Activated CD8-positive, alpha-beta T cell treated with anti-CD3 and anti-CD28 coated beads for 36 hours (primary cell): ENCODE measurements at regions of chrX and their contacts with region 1.

Region 1: DNA sequence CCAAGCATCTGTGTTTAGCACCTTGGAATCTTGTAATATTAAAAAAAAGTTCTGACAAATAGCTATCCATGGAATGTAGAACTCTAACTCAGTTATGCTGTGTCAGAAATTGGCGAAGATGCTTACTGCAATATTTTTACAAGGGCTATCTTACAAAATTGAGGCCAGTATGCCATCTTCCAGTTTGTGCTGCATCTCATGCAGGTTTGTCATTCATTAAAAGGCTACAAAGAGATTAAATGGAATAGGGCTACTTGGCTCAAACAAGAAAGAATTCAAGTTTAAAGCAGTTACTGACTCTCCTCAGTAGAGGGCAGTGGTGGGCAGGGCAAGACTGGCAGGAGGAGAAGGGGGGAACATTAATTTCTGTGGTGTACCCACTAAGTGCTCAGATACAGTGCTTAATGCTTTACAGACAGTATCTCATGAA is 66.5 kb downstream of the SHROOM4 start:
- DNase-seq: no peak
- ATAC-seq: no peak
- H3K4me3 Mint-ChIP-seq: no peak overlapping the region
- H3K27ac Mint-ChIP-seq: no peak overlapping the region
- H3K4me1 Mint-ChIP-seq: no peaks in the 10 kb centered on the region
- H3K27me3 Mint-ChIP-seq: peaks cover 11% of the 10 kb centered on the region
- CTCF ChIP-seq: peak; percentile 67

Region 2: DNA sequence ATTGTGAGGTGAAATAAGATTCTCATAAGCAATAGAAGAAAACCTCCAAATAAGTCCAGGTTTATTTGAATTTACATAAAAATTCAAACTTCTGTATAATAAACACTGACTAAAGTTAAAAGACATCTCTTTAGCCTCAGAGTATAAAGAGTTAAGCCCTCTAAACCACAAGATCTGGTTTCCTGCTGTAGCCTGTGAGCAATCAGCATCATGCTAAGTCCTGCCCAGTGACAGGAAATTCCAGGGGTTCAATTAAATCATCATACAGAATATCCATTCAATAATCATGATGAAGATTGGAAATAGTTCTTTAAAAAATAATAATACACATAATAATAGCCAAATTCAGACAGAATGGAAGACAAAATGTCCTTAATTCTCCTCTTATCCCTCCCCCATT is 137.7 kb before region 1 on chrX:
- CTCF ChIA-PET with region 1: no interaction called
- POLR2A ChIA-PET with region 1: no interaction called
- intact Hi-C with region 1: no loop called
- DNase-seq: no peak
- ATAC-seq: no peak
- H3K4me3 Mint-ChIP-seq: no peak overlapping the region
- H3K27ac Mint-ChIP-seq: no peak overlapping the region
- H3K4me1 Mint-ChIP-seq: no peaks in the 10 kb centered on the region
- H3K27me3 Mint-ChIP-seq: peaks cover 3% of the 10 kb centered on the region
- CTCF ChIP-seq: no peak

Region 3: GRCh38 chrX:50691820-50692219 is 55.7 kb before region 1 on chrX:
- CTCF ChIA-PET with region 1: no interaction called
- POLR2A ChIA-PET with region 1: no interaction called
- intact Hi-C with region 1: no loop called
- DNase-seq: peak; percentile 4
- ATAC-seq: no peak
- H3K4me3 Mint-ChIP-seq: no peak overlapping the region
- H3K27ac Mint-ChIP-seq: no peak overlapping the region
- H3K4me1 Mint-ChIP-seq: no peaks in the 10 kb centered on the region
- H3K27me3 Mint-ChIP-seq: peaks cover 4% of the 10 kb centered on the region
- CTCF ChIP-seq: peak; percentile 52

Region 4: GRCh38 chrX:50905334-50905733 is 157.8 kb after region 1 on chrX:
- CTCF ChIA-PET with region 1: interaction called, 13 read pairs
- POLR2A ChIA-PET with region 1: no interaction called
- intact Hi-C with region 1: loop called (anchors 10 kb)
- DNase-seq: peak; percentile 5
- ATAC-seq: no peak
- H3K4me3 Mint-ChIP-seq: no peak overlapping the region
- H3K27ac Mint-ChIP-seq: no peak overlapping the region
- H3K4me1 Mint-ChIP-seq: no peaks in the 10 kb centered on the region
- H3K27me3 Mint-ChIP-seq: no peaks in the 10 kb centered on the region
- CTCF ChIP-seq: peak; percentile 26